AG04450 (cell line): ENCODE measurements at regions of chr6 and their contacts with region 1.

Region 1: DNA sequence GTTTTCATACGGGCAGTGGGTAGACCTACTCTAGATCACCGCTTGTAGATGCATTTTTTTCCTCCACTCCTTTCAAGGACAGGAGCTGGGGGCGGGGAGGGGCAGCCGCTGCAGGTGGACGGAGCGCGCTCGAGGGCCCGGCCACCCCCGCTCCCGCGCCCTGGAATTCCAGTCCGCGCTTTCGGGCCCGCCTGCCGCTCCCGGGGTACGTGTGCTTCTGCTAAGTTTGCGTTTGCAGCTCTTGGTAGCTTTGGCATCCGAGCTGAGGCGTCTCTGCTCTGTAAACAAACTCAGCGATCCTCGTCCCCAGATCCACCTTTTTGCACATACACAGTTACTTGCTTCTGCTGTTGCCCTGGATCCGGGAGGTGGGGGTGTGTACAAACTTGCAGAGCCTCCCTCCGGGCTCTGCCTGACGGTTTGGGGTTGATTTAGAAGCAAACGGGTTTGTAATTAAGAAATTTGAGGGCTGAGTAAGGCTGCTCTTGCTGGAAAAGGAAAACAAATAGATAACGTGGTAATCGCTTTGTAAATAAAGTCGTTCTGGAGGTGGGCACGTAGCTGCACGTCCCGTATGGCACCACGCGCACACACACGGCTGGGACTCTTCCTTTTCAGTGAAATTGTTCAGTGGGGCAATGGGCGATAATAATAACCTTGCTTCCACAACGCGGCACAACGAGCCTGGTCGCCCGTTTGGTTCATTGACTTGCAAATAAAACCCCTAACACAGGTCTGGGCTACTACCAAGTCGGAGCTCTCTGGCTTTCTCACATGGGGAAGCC is 976 bp upstream of the CITED2 start:
- DNase-seq: peak; percentile 95
- H3K4me3 ChIP-seq: peak overlapping the region; percentile 96
- H3K27ac ChIP-seq: peak overlapping the region; percentile 94
- H3K27me3 ChIP-seq: no peaks in the 10 kb centered on the region
- CTCF ChIP-seq: peak; percentile 23; the same call in 1 of the 2 replicates

Region 2: GRCh38 chr6:139361211-139361610 is 14.2 kb before region 1 on chr6:
- CTCF ChIA-PET with region 1: no interaction called
- POLR2A ChIA-PET with region 1: no interaction called
- DNase-seq: no peak
- H3K4me3 ChIP-seq: no peak overlapping the region
- H3K27ac ChIP-seq: no peak overlapping the region
- H3K27me3 ChIP-seq: no peaks in the 10 kb centered on the region
- CTCF ChIP-seq: no peak

Region 3: DNA sequence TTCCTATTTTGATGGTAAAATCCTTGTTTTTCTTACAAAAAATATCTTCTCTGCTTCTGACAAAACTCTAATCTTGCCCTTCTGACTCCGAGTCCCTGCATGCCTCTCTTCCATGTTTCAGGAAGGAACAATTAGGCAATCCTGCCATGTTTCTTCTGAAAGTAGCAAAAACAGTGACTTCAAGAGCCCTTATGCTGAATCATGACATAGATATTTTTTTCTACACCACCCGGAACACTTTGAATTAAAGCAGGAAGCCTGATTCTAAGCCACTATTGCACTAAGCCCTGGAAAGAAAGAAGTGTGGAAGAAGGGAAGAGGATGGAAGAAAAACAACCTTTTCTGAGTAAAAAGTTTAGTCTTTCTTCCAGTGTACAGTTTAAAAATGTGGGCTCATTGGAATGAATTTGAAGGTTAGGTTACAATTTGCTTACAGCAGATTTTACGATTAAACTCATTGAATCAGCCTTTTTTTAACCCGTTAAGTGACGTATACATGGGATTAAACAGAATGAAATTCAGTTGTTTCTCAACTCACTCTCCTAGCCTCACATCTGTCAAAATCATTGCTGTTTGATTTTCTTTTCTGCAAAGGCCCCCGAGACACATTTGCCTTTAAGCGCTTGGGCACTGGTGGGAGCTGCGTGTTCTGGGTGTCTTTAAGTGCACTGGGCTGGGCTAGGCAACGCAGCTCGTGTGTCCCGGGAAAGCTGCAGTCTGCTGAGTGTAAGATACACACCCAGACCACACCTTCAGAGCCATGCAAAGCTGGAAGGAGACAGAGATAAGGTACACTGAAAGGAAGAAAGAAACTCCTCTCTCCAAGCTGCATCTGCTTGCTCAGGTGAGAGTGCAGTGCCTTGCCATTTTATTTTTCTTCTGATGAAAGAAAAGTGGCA is 158.4 kb after region 1 on chr6:
- CTCF ChIA-PET with region 1: no interaction called
- POLR2A ChIA-PET with region 1: interaction called, 19 read pairs
- DNase-seq: peak; percentile 37
- H3K4me3 ChIP-seq: no peak overlapping the region
- H3K27ac ChIP-seq: peak overlapping the region; percentile 62
- H3K27me3 ChIP-seq: no peaks in the 10 kb centered on the region
- CTCF ChIP-seq: no peak

Region 4: GRCh38 chr6:139577763-139578604 is 202.6 kb after region 1 on chr6:
- CTCF ChIA-PET with region 1: no interaction called
- POLR2A ChIA-PET with region 1: interaction called, 33 read pairs
- DNase-seq: peak; percentile 81
- H3K4me3 ChIP-seq: no peak overlapping the region
- H3K27ac ChIP-seq: peak overlapping the region; percentile 94
- H3K27me3 ChIP-seq: no peaks in the 10 kb centered on the region
- CTCF ChIP-seq: no peak

Region 5: DNA sequence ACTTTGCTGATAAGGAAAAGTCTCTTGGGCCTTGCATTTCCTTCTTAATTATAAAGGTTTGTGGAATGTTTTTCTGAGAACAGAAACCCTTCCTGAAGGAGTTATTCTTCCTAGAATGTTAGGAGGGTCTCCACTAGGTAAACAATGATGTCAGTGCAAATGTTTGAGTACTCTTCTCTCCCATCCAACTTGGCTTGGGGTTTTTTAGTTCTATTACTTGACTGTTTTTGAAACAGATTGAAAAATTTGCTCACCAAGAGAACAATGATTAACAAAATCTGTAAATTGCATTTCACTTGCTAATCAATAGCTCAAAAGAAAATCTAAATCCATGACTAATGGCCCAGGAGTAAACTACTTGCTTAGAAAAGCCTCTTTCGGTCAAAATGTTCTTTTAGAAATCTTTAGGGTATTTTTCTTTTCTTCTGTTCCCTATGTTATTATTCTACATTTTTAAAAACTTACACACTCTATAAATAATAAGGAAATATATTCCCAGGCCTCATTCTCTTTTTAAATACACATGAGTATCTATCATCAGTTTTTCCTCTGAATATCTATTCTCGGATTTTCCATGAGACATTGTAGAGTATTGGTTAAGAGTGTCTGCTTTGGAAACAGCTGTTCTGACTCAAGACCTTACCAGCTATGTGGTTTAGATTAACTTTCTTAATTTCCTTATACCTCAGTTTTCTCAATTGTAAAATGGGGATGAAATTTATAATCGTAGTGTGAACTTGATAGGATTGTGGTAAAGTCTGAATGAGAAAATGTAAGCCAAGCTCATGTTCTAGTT is 233.2 kb after region 1 on chr6:
- CTCF ChIA-PET with region 1: no interaction called
- POLR2A ChIA-PET with region 1: interaction called, 15 read pairs
- DNase-seq: no peak
- H3K4me3 ChIP-seq: no peak overlapping the region
- H3K27ac ChIP-seq: no peak overlapping the region
- H3K27me3 ChIP-seq: no peaks in the 10 kb centered on the region
- CTCF ChIP-seq: no peak

Region 6: GRCh38 chr6:139764498-139764986 is 389.1 kb after region 1 on chr6:
- CTCF ChIA-PET with region 1: interaction called, 3 read pairs
- POLR2A ChIA-PET with region 1: interaction called, 42 read pairs
- DNase-seq: peak; percentile 94
- H3K4me3 ChIP-seq: no peak overlapping the region
- H3K27ac ChIP-seq: peak overlapping the region; percentile 73
- H3K27me3 ChIP-seq: no peaks in the 10 kb centered on the region
- CTCF ChIP-seq: no peak

Region 7: GRCh38 chr6:139981768-139982181 is 606.4 kb after region 1 on chr6:
- CTCF ChIA-PET with region 1: no interaction called
- POLR2A ChIA-PET with region 1: interaction called, 15 read pairs
- DNase-seq: no peak
- H3K4me3 ChIP-seq: no peak overlapping the region
- H3K27ac ChIP-seq: peak overlapping the region; percentile 21
- H3K27me3 ChIP-seq: no peaks in the 10 kb centered on the region
- CTCF ChIP-seq: no peak